Activated T-helper 1 cell treated with anti-CD3 and anti-CD28 coated beads, Interleukin-12 subunit alpha, Interleukin-12 subunit beta, Interleukin-2, Interleukin-4 antibody, amounts not matched to agents 30 ng/mL and 10 ng/mL and 1 ng/mL, durations not matched to agents 14 hours and 24 hours and 36 hours (primary cell): ENCODE measurements at regions of chr2 and their contacts with region 1.

Region 1: DNA sequence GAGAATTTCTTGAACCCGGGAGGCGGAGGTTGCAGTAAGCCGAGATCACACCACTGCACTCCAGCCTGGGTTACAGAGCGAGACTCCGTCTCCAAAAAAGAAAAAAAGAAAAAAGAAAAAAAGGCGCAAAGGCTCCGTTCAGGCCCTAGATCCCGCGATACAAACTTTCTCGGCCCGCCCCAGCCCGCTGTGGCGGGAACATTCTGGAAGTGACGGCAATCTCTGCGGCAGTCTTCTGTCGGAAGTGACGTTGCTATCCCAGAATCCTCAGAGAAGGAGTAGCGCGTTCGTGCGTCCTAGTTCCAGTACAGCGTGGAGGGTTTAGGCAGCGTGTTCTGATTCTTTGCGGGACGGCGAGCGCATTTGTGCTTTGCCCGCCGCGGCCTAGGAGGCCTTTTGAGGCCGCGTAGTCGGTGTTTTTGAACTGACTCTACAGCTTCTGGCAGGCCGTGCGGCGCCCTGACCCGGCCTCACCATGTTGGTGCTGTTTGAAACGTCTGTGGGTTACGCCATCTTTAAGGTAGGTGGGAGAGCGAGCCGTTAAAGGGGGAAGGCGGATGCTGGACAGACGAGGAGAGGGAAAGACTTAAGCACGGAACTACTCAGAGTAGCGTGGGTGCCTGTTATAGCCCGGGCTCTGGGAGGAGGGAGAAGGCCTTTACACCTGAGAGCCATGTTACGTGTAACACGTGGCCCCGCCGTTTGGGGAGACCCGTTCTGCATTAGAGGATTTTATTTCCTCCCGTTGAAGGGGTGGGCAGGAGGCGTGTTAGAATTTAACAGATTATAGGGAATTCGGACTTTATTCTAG is at the start of gene NOP58:
- DNase-seq: peak; percentile 91
- H3K4me3 Mint-ChIP-seq: peak within 1 kb of the TSS; percentile 55
- H3K27ac Mint-ChIP-seq: peak within 1 kb of the TSS; percentile 45
- H3K4me1 Mint-ChIP-seq: peaks cover 19% of the 10 kb centered on the region
- H3K27me3 Mint-ChIP-seq: no peaks in the 10 kb centered on the region
- total RNA-seq, gene NOP58: 227 and 241 TPM in 2 replicates

Region 2: DNA sequence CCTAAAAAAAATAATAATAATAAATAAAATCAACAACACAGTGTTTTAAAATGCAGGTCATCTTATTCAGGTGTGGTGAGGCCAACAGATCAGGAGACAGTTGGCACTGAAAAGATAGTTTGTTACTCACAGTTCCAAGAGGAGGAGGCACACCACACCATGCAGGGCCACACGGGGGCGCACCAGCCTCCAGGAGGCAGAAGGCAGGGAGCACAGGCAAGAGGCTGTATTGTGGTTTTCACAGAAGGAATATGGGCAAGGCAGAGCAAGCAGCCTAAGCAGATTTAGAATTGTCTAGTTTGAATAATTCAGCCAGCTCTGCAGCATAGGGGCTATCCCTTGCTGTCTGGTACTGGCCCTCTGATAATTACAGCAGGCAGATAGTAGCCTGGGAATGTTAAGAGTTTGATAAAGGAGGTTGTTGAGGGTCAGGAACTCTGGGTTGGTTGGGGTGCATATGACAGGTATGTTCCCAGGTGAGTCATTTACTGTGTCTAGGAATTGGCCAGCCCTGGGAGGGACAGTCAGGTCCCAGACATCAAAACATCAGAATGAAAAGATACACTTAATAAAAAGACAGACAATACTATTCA is 161.3 kb before region 1 on chr2:
- intact Hi-C with region 1: no loop called
- DNase-seq: peak; percentile 8
- H3K4me3 Mint-ChIP-seq: no peak overlapping the region
- H3K27ac Mint-ChIP-seq: no peak overlapping the region
- H3K4me1 Mint-ChIP-seq: no peaks in the 10 kb centered on the region
- H3K27me3 Mint-ChIP-seq: peaks cover 11% of the 10 kb centered on the region

Region 3: DNA sequence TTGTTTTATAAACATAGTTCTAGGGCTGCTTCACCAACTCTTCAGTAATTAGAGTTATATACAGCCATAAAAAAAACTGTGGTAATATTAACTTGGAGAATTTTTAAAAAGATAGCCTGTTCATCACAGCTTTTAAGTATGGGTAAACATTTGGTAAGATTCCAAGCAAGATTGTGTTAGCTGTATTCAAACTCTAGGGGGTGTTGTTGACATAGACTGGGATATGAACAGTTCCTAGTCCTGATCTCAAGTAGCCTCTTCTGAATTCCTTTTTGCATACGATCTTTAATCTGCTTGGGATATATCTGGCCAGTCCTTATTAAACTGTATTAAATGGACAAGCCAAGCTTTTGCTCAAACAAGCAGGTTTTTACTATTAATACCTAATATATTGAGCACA is 13.3 kb after region 1 on chr2:
- intact Hi-C with region 1: loop called (anchors 1 kb)
- DNase-seq: no peak
- H3K4me3 Mint-ChIP-seq: peak overlapping the region; percentile 7
- H3K27ac Mint-ChIP-seq: peak overlapping the region; percentile 92
- H3K4me1 Mint-ChIP-seq: peaks cover 24% of the 10 kb centered on the region
- H3K27me3 Mint-ChIP-seq: no peaks in the 10 kb centered on the region

Region 4: GRCh38 chr2:202418511-202418910 is 152.8 kb after region 1 on chr2:
- intact Hi-C with region 1: no loop called
- DNase-seq: no peak
- H3K4me3 Mint-ChIP-seq: no peak overlapping the region
- H3K27ac Mint-ChIP-seq: no peak overlapping the region
- H3K4me1 Mint-ChIP-seq: no peaks in the 10 kb centered on the region
- H3K27me3 Mint-ChIP-seq: no peaks in the 10 kb centered on the region

Region 5: GRCh38 chr2:202429164-202429980 is 163.7 kb after region 1 on chr2:
- intact Hi-C with region 1: no loop called
- DNase-seq: no peak
- H3K4me3 Mint-ChIP-seq: no peak overlapping the region
- H3K27ac Mint-ChIP-seq: no peak overlapping the region
- H3K4me1 Mint-ChIP-seq: no peaks in the 10 kb centered on the region
- H3K27me3 Mint-ChIP-seq: no peaks in the 10 kb centered on the region

Region 6: GRCh38 chr2:202588647-202589581 is 323.2 kb after region 1 on chr2:
- intact Hi-C with region 1: no loop called
- DNase-seq: peak; percentile 49
- H3K4me3 Mint-ChIP-seq: no peak overlapping the region
- H3K27ac Mint-ChIP-seq: no peak overlapping the region
- H3K4me1 Mint-ChIP-seq: peaks cover 7% of the 10 kb centered on the region
- H3K27me3 Mint-ChIP-seq: no peaks in the 10 kb centered on the region

Region 7: DNA sequence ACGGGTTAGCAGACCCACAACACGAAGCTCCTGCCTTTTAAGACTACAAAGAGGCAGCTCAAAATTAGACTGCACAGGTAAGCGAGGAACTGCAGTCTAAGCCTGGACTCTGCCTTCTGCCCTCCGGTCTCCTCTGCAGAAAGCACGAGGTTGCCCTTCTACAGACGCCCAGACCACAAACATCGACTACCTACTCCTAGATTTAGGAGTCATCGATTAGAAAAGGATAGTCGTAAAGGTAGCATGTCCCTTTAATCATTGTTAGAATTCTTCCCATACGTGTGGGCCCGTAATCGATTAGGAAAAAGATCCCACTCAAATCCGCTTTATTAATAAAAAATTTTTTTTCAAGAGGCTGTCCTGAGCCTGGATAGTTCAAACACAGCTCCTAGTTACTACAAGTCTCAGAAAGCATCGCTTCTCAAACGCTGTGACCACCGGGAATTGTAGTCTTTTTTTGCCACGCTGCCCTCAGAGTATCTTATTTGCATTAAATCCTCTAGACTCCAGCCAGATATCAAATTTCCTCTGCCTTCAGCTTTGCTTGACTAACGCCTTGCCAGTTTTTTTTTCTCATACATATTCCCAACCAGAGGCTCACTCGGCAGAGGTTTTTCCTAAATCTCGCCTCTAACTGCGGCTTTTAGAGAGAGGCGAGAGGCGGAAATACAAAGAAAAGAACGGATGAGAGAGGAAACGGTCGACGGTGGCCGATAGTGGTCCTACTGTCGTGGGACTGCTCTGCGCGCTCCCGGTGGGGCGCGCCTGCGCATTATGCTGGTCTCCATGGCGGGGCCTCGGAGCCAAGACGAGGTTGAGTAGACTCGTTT is 646.1 kb after region 1 on chr2 and contains the starts of genes CARF and WDR12:
- intact Hi-C with region 1: loop called (anchors 5 kb)
- DNase-seq: peak; percentile 87
- H3K4me3 Mint-ChIP-seq: peak within 1 kb of the TSS; percentile 96
- H3K27ac Mint-ChIP-seq: peak within 1 kb of the TSS; percentile 98
- H3K4me1 Mint-ChIP-seq: peaks cover 31% of the 10 kb centered on the region
- H3K27me3 Mint-ChIP-seq: no peaks in the 10 kb centered on the region
- total RNA-seq, gene CARF: 3.6 and 4.3 TPM in 2 replicates
- total RNA-seq, gene WDR12: 149 and 165 TPM in 2 replicates